ENCODE measurements at regions of chrX and their contacts with region 1.

Region 1: DNA sequence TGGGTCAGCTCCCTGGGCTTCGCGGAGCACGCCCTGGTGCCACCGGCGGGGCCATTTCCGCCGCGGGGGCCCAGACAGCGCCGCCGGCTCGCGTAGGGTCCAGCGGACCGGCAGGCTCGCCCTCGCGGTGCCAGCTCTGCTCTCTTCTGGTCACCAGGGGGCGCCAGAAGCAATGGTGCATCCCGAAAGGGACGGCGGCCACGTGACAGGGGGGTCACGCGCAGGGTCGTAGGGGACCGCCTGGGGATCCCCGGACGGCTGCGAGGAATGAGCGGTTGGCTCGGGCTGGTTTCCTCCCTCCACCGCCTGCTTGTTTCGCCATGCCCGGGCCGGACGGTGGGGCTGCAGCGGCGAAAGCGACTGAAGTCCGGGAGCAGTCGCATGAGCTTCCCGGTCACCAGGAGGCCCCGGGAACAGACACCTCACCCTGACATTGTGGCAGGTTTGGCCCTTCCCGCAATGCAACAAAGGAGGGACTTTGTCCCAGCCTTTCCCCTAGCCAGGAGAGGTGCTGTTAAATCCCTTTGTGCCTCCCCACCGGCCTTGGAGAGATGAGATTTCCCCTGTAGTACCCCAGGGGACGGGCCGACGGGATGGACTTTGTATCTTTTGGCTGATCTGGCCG is 15.8 kb downstream of the ZCCHC12 start:
- DNase-seq: peak; percentile 84
- H3K4me3 Mint-ChIP-seq: peak overlapping the region; percentile 67
- H3K27ac Mint-ChIP-seq: no peak overlapping the region
- H3K4me1 Mint-ChIP-seq: no peaks in the 10 kb centered on the region
- H3K27me3 Mint-ChIP-seq: no peaks in the 10 kb centered on the region
- CTCF ChIP-seq: peak; percentile 76

Region 2: GRCh38 chrX:118823263-118824172 is 15.9 kb before region 1 on chrX and contains the start of gene ZCCHC12:
- CTCF ChIA-PET with region 1: interaction called, 10 read pairs
- intact Hi-C with region 1: no loop called
- DNase-seq: peak; percentile 41
- H3K4me3 Mint-ChIP-seq: peak within 1 kb of the TSS; percentile 75
- H3K27ac Mint-ChIP-seq: no peak within 1 kb of the TSS
- H3K4me1 Mint-ChIP-seq: peaks cover 11% of the 10 kb centered on the region
- H3K27me3 Mint-ChIP-seq: peaks cover 58% of the 10 kb centered on the region
- CTCF ChIP-seq: no peak
- total RNA-seq, gene ZCCHC12: not detected in 2 replicates

Region 3: DNA sequence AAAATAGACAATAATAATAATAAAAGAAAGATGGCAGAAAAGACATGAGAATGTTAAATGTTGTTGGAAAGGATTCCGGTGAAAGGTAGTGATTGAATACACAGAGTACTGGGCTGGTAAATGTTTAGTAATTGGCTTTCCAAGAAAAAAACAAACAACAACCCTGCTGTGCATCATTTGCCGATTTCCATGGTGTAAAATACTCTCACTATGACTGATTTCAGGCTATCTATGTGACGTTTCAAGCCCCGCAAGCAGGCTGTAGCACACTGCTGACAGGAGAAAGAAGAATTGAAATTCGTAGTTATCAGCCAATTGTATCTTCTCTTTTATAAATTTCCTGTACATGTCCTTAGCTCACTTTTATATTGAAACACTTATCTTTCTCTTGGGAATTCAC is 867.2 kb after region 1 on chrX:
- CTCF ChIA-PET with region 1: no interaction called
- intact Hi-C with region 1: no loop called
- DNase-seq: no peak
- H3K4me3 Mint-ChIP-seq: no peak overlapping the region
- H3K27ac Mint-ChIP-seq: no peak overlapping the region
- H3K4me1 Mint-ChIP-seq: no peaks in the 10 kb centered on the region
- H3K27me3 Mint-ChIP-seq: peaks cover 43% of the 10 kb centered on the region
- CTCF ChIP-seq: no peak